Right cardiac atrium (tissue), 5 donors: ENCODE measurements at regions of chr11 and their contacts with region 1.

Region 1: DNA sequence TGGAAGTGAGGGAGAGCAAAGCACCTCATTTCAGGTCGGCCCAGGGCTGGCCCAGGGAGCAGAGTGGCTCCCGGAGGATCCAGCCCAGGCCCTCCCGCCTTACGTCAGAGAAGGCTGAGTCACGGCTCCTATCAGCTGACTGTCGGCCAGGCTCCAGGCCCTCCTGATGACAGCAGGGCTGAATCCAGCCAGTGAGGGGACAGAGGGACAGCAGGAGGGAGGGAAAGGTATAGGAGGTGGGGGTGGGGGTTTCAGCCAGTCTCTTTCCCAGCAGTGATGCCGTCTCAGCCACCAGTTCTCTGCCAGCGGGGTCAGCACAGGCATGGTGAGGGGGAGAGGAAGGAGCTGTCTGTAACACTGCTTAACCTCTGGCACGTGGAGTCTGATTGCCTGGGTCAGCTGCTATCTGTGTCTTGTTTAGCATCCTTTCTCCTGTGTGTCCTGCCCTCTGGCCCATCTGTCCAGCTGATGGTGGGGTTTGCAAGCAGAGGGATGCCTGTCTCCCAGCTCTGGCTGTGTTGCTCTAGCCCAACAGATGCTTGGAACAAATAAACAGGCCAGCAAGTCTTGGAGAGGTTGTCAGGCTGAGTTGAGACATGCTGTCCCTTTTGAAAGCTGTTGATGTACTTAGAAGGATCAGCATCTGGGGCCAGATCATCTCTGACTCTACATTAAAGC is 74.0 kb downstream of the ADAMTS15 start:
- DNase-seq: peak; percentile 96 to 98 (median 96)
- ATAC-seq: peak; percentile 94 to 95
- H3K4me3 ChIP-seq: no peak overlapping the region
- H3K27ac ChIP-seq: peak overlapping the region; percentile 77
- H3K4me1 ChIP-seq: peaks cover 24% of the 10 kb centered on the region
- H3K27me3 ChIP-seq: no peaks in the 10 kb centered on the region

Region 2: DNA sequence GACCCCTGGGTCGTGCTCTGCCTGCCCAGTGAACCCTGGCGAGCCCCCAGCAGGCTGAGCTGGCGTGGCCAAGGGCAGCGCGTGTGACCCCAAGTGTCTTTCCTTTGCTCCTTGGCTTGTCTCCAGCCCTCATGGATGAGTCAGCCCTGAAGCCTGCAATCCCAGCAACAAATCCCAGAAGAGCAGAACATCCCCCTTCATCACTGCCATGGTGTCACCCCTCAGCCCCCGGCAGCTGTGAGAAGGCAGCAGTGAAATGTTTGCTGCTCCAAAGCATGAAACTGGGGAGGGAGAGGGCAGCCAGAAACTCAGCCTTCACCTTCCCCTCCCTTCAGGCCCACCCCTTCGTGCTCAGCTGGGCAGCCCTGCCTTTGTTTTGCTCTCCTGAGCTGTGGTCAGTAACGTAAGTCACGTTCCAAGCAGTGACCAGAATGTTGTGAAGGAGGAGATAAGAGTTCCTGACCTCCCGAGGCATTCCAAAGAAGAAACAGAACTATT is 44.2 kb before region 1 on chr11:
- intact Hi-C with region 1: no loop called
- DNase-seq: peak; percentile 87 to 91 (median 90)
- ATAC-seq: peak; percentile 59 to 77
- H3K4me3 ChIP-seq: no peak overlapping the region
- H3K27ac ChIP-seq: peak overlapping the region; percentile 92
- H3K4me1 ChIP-seq: peaks cover 32% of the 10 kb centered on the region
- H3K27me3 ChIP-seq: no peaks in the 10 kb centered on the region

Region 3: DNA sequence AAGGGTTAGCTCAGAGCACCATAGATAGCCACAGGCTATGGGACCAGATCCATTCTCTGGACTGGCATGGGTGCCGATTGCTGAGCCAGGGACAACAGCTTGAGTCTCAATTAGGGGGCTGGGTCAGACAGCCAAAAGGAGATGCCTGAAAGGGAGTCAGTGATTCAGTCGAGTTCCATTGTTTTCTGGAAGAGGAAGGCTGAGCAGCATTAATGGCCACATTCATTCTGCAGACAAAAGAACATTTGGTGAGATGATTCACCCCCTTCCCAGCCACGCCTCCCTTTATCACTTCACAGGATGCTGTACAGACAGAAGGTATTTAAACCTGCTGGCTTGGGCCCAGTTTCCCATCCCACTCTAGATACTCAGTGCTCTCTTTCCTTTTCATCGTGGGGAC is 57.9 kb after region 1 on chr11:
- intact Hi-C with region 1: loop called in 1 of 4 experiments (anchors 2 kb)
- DNase-seq: peak in 2 of 3 donors; percentile 79 to 80
- ATAC-seq: peak; percentile 34 to 82
- H3K4me3 ChIP-seq: no peak overlapping the region
- H3K27ac ChIP-seq: peak overlapping the region; percentile 80
- H3K4me1 ChIP-seq: peaks cover 15% of the 10 kb centered on the region
- H3K27me3 ChIP-seq: no peaks in the 10 kb centered on the region